K562 (cell line): ENCODE measurements at regions of chr18 and their contacts with region 1.

Region 1: GRCh38 chr18:23032030-23032582 is 99.0 kb downstream of the RBBP8 start:
- DNase-seq: no peak
- ATAC-seq: no peak
- H3K4me3 ChIP-seq: no peak overlapping the region
- H3K27ac ChIP-seq: no peak overlapping the region
- H3K4me1 ChIP-seq: peaks cover 0 to 4% of the 10 kb centered on the region in 2 experiments; a peak in 2 of 5 replicates
- H3K27me3 ChIP-seq: no peaks in the 10 kb centered on the region
- CTCF ChIP-seq: no peak
- EP300 ChIP-seq: no peak
- POLR2A ChIP-seq: no peak
- RAD21 ChIP-seq: no peak

Region 2: GRCh38 chr18:23099621-23100020 is 67.5 kb after region 1 on chr18:
- CTCF ChIA-PET with region 1: no interaction called
- POLR2A ChIA-PET with region 1: no interaction called
- in situ Hi-C with region 1: no loop called
- intact Hi-C with region 1: no loop called
- DNase-seq: no peak
- ATAC-seq: no peak
- H3K4me3 ChIP-seq: no peak overlapping the region
- H3K27ac ChIP-seq: no peak overlapping the region
- H3K4me1 ChIP-seq: peaks cover 0 to 3% of the 10 kb centered on the region in 2 experiments; a peak in 2 of 5 replicates
- H3K27me3 ChIP-seq: peaks cover 21 to 42% of the 10 kb centered on the region in 2 experiments
- CTCF ChIP-seq: no peak
- EP300 ChIP-seq: no peak
- POLR2A ChIP-seq: no peak
- RAD21 ChIP-seq: no peak

Region 3: GRCh38 chr18:23291456-23292205 is 259.5 kb after region 1 on chr18:
- CTCF ChIA-PET with region 1: no interaction called
- POLR2A ChIA-PET with region 1: no interaction called
- in situ Hi-C with region 1: no loop called
- intact Hi-C with region 1: no loop called
- DNase-seq: no peak
- ATAC-seq: peak; percentile 62
- H3K4me3 ChIP-seq: no peak overlapping the region
- H3K27ac ChIP-seq: no peak overlapping the region
- H3K4me1 ChIP-seq: no peaks in the 10 kb centered on the region
- H3K27me3 ChIP-seq: no peaks in the 10 kb centered on the region
- CTCF ChIP-seq: no peak
- EP300 ChIP-seq: no peak
- POLR2A ChIP-seq: no peak
- RAD21 ChIP-seq: no peak

Region 4: GRCh38 chr18:23401400-23402347 is 369.6 kb after region 1 on chr18:
- CTCF ChIA-PET with region 1: no interaction called
- POLR2A ChIA-PET with region 1: no interaction called
- in situ Hi-C with region 1: no loop called
- intact Hi-C with region 1: loop called (anchors 10 kb)
- DNase-seq: no peak
- ATAC-seq: peak; percentile 42
- H3K4me3 ChIP-seq: no peak overlapping the region
- H3K27ac ChIP-seq: no peak overlapping the region
- H3K4me1 ChIP-seq: no peaks in the 10 kb centered on the region
- H3K27me3 ChIP-seq: no peaks in the 10 kb centered on the region
- CTCF ChIP-seq: no peak
- EP300 ChIP-seq: no peak
- POLR2A ChIP-seq: no peak
- RAD21 ChIP-seq: no peak